Activated naive CD4-positive, alpha-beta T cell treated with anti-CD3 and anti-CD28 coated beads for 36 hours (primary cell): ENCODE measurements at regions of chr9 and their contacts with region 1.

Region 1: DNA sequence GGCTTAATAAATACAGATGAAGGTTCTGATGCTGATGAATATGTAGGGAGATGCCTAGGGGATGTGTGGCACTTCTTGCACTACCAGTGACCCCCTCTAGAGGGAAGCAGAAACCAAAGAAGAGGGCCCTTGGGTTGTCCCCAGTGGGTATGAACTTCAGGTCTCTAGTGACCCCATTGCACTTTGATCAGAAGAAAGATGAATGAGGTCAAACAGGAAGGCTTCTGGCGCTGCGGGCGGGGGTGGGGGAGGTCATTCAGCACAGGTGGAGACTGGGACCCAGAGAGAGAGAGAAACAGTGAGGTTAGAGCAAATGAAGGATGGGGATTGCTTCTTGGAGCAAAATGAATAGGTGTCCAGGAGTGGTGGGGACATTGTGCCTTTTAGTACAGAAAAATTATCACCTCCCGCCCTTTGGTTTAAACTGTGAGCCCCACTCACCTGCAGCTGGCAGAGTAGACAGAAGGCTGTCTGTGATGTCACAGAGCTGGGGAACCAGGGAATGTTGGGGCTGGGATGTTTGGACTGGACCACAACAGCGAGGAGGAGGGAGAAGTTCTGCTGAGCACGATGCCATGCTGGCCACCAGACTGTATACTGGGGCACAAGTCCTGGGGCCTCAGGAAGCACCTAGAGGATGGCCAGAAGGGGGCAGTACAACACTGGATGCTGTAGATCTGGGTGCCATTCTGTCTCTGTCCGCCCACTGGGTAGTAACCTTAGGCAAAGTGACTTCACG is at the start of gene TEX48:
- DNase-seq: peak; percentile 92
- H3K4me3 Mint-ChIP-seq: no peak within 1 kb of the TSS
- H3K27ac Mint-ChIP-seq: peak within 1 kb of the TSS; percentile 64
- H3K4me1 Mint-ChIP-seq: peaks cover 39% of the 10 kb centered on the region
- H3K27me3 Mint-ChIP-seq: peaks cover 4% of the 10 kb centered on the region
- total RNA-seq, gene TEX48: not detected

Region 2: GRCh38 chr9:114662081-114662989 is 19.4 kb before region 1 on chr9:
- CTCF ChIA-PET with region 1: interaction called, 14 read pairs
- intact Hi-C with region 1: no loop called
- DNase-seq: peak; percentile 77
- H3K4me3 Mint-ChIP-seq: no peak overlapping the region
- H3K27ac Mint-ChIP-seq: no peak overlapping the region
- H3K4me1 Mint-ChIP-seq: peaks cover 14% of the 10 kb centered on the region
- H3K27me3 Mint-ChIP-seq: peaks cover 2% of the 10 kb centered on the region

Region 3: DNA sequence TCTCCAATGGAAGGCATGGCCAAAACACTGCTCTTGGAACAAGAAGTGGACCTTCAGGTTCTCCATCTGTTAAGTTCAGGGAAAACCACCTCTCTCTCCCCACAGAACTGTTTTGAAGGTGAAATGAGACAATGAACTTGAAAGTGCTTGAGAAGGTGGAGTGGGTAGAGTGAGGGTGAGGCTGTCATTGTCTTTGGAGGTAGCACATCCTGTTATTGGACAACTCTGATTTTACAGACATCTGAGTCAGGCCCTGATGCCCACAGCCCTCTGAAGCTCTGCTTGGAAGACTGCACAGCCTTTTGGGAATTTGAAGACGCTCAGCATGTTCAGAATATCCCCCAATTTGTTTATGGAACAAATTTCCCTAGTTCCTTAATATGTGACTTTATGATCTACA is 27.9 kb after region 1 on chr9:
- CTCF ChIA-PET with region 1: interaction called, 27 read pairs
- intact Hi-C with region 1: no loop called
- DNase-seq: peak; percentile 22
- H3K4me3 Mint-ChIP-seq: no peak overlapping the region
- H3K27ac Mint-ChIP-seq: no peak overlapping the region
- H3K4me1 Mint-ChIP-seq: peaks cover 30% of the 10 kb centered on the region
- H3K27me3 Mint-ChIP-seq: no peaks in the 10 kb centered on the region

Region 4: GRCh38 chr9:114738581-114739316 is 57.0 kb after region 1 on chr9:
- CTCF ChIA-PET with region 1: interaction called, 93 read pairs
- intact Hi-C with region 1: loop called (anchors 1 kb)
- DNase-seq: peak; percentile 82
- H3K4me3 Mint-ChIP-seq: no peak overlapping the region
- H3K27ac Mint-ChIP-seq: peak overlapping the region; percentile 86
- H3K4me1 Mint-ChIP-seq: peaks cover 56% of the 10 kb centered on the region
- H3K27me3 Mint-ChIP-seq: no peaks in the 10 kb centered on the region

Region 5: DNA sequence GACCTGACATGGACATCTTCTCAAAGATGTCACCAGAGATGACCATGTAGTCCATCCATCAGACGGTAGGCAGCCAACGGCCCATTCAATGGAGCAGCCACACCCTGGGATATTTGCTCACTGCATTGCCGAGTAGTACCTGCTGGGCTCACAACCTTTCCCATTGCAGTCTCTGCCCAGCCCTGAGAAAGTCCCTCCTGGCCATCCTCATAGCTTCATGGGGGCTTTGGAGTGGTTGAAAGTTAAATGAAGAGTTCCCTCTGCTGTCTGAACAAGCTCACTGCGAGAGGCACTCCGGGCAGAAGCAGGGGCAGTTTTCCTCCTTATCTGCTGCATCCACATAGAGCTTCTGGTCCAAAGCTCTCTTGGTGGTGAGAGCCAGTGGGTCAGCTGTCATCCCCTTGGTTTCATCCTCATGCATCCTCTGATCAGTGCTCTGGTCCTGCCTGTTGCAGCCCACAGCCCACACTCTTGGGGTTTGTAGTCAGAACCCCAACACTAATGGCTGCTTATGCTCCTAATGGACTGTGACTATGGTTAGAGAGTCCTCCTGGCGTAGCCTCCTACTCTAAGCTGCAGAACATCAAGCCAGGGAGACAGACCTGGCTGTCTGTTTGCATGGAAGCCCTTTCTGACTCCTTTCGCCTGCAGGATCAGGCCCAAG is 225.3 kb after region 1 on chr9:
- CTCF ChIA-PET with region 1: interaction called, 74 read pairs
- intact Hi-C with region 1: loop called (anchors 1 kb)
- DNase-seq: peak; percentile 46
- H3K4me3 Mint-ChIP-seq: no peak overlapping the region
- H3K27ac Mint-ChIP-seq: peak overlapping the region; percentile 98
- H3K4me1 Mint-ChIP-seq: peaks cover 54% of the 10 kb centered on the region
- H3K27me3 Mint-ChIP-seq: no peaks in the 10 kb centered on the region

Region 6: GRCh38 chr9:115013998-115014397 is 332.2 kb after region 1 on chr9:
- CTCF ChIA-PET with region 1: interaction called, 156 read pairs
- intact Hi-C with region 1: loop called (anchors 1 kb)
- DNase-seq: peak; percentile 92
- H3K4me3 Mint-ChIP-seq: no peak overlapping the region
- H3K27ac Mint-ChIP-seq: peak overlapping the region; percentile 18
- H3K4me1 Mint-ChIP-seq: peaks cover 44% of the 10 kb centered on the region
- H3K27me3 Mint-ChIP-seq: no peaks in the 10 kb centered on the region

Region 7: GRCh38 chr9:115591584-115591984 is 909.8 kb after region 1 on chr9:
- CTCF ChIA-PET with region 1: no interaction called
- intact Hi-C with region 1: loop called (anchors 5 kb)
- DNase-seq: peak; percentile 16
- H3K4me3 Mint-ChIP-seq: no peak overlapping the region
- H3K27ac Mint-ChIP-seq: no peak overlapping the region
- H3K4me1 Mint-ChIP-seq: no peaks in the 10 kb centered on the region
- H3K27me3 Mint-ChIP-seq: peaks cover 10% of the 10 kb centered on the region